ENCODE measurements at regions of chr18 and their contacts with region 1.

Region 1: DNA sequence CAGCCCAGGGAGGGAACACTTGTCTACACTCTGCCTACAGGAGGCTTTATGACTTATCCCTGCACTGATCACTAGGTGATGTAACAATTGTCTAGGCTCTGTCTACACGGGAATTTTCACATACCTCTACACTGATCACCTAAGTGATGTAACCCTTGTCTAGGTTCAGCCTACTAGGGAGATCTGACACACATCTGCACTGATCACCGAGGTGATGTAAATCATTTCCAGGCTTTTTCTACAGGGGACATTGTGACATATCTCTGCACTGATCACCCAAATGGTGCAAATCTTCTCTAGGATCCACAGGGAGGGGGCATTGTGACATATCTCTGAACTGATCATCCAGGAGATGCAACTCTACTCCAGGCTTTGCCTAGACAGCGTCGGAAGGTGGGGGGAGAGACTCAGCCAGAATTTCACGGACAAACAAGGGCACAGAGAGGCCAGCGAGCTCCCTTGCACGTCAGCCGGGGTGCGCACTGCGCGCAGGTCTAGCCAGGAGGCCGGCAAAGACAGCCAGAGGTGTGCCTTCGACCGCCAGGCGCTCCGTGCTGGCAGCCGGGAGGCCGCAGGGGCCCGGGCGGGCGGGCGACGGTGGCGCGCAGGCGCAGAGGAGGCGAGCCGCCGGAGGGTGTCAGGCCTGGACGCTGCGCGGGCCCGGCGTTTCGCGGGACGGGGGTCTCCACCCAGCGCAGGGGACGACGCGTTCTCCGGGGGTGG is 46.9 kb upstream of the USP14 start:
- DNase-seq: peak; percentile 60 to 88 (median 69)
- ATAC-seq: peak; percentile 60
- H3K4me3 ChIP-seq: peak overlapping the region in 1 of 2 experiments; percentile 19
- H3K4me3 Mint-ChIP-seq: peak overlapping the region; percentile 86
- H3K27ac ChIP-seq: peak overlapping the region in 1 of 2 experiments; percentile 44
- H3K27ac Mint-ChIP-seq: peak overlapping the region; percentile 94
- H3K4me1 ChIP-seq: peaks cover 6% of the 10 kb centered on the region
- H3K4me1 Mint-ChIP-seq: peaks cover 8% of the 10 kb centered on the region
- H3K27me3 ChIP-seq: no peaks in the 10 kb centered on the region
- H3K27me3 Mint-ChIP-seq: no peaks in the 10 kb centered on the region
- CTCF ChIP-seq: no peak

Region 2: DNA sequence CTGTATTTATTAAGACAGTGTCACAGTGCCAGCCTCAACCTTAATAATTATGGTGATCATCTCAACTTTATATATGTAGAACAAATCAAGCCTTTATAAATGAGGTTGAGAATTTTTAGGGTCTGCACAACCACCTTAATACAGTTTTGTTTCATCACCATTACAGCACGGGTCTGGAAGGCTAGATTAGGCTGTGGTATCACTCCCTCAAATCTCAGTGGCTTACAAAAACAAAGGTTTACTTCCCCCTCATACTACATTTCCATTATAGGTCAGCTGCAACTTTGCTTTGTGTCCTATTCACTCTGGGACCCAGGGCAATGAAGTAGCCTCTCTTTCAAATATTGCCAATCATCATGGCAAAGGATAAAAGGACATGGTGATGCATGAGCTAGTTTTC is 23.6 kb after region 1 on chr18:
- CTCF ChIA-PET with region 1: no interaction called
- POLR2A ChIA-PET with region 1: no interaction called
- intact Hi-C with region 1: no loop called
- DNase-seq: no peak
- ATAC-seq: no peak
- H3K4me3 ChIP-seq: no peak overlapping the region
- H3K4me3 Mint-ChIP-seq: no peak overlapping the region
- H3K27ac ChIP-seq: no peak overlapping the region
- H3K27ac Mint-ChIP-seq: no peak overlapping the region
- H3K4me1 ChIP-seq: no peaks in the 10 kb centered on the region
- H3K4me1 Mint-ChIP-seq: peaks cover 4% of the 10 kb centered on the region
- H3K27me3 ChIP-seq: no peaks in the 10 kb centered on the region
- H3K27me3 Mint-ChIP-seq: no peaks in the 10 kb centered on the region
- CTCF ChIP-seq: no peak

Region 3: DNA sequence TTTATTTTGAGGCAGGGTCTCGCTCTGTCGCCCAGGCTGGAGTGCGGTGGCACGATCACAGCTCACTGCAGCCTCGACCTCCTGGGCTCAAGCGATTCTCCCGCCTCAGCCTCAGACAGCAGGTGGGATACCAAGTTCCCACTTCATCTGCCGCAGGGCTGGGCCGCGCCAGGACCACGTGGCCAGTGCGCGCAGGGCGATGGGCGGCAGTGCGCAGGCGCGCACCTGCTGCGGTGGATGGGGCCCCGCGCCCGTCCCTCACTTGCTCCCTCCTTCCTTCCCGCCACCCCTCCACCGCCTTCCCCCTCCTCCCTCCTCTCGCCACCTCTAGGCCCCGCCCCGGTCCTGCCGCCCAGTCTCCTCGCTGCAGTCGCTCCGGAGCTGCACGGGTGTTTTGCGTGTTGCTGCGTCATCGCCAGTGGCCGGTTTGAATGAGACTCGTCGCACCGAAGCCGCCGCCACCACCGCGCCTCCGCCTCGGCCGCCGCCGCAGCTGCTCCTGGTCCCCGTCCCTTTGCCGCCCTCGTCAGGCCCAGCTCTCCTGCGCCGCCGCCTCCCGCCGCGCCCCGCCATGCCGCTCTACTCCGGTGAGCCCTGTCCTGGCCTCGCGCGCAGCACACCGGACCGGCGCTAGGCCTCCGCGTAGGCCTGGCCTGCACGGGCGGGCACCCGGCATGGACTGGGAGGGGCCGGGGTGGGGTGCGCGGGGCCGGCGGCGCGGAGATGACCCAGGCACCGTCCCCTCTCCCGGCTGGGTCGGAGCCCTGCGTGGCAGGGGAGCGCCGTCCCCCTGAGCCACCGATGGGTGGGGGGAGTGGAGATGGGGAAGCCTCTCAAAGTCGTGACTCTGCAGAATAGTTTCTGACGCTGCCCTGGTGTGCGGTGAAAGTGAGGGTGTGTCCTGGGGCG is 46.9 kb after region 1 on chr18 and contains the start of gene USP14:
- CTCF ChIA-PET with region 1: no interaction called
- POLR2A ChIA-PET with region 1: no interaction called
- intact Hi-C with region 1: loop called (anchors 1 kb)
- DNase-seq: peak; percentile 93 to 99 (median 97)
- ATAC-seq: peak; percentile 92
- H3K4me3 ChIP-seq: peak within 1 kb of the TSS; percentile 64 to 81
- H3K4me3 Mint-ChIP-seq: peak within 1 kb of the TSS; percentile 88
- H3K27ac ChIP-seq: peak within 1 kb of the TSS; percentile 59 to 83
- H3K27ac Mint-ChIP-seq: peak within 1 kb of the TSS; percentile 95
- H3K4me1 ChIP-seq: peaks cover 22% of the 10 kb centered on the region
- H3K4me1 Mint-ChIP-seq: peaks cover 35% of the 10 kb centered on the region
- H3K27me3 ChIP-seq: no peaks in the 10 kb centered on the region
- H3K27me3 Mint-ChIP-seq: no peaks in the 10 kb centered on the region
- CTCF ChIP-seq: no peak
- total RNA-seq, gene USP14: 61.3 to 64.1 TPM

Region 4: GRCh38 chr18:228586-228985 is 117.1 kb after region 1 on chr18:
- CTCF ChIA-PET with region 1: no interaction called
- POLR2A ChIA-PET with region 1: no interaction called
- intact Hi-C with region 1: no loop called
- DNase-seq: no peak
- ATAC-seq: no peak
- H3K4me3 ChIP-seq: no peak overlapping the region
- H3K4me3 Mint-ChIP-seq: no peak overlapping the region
- H3K27ac ChIP-seq: no peak overlapping the region
- H3K27ac Mint-ChIP-seq: no peak overlapping the region
- H3K4me1 ChIP-seq: no peaks in the 10 kb centered on the region
- H3K4me1 Mint-ChIP-seq: no peaks in the 10 kb centered on the region
- H3K27me3 ChIP-seq: no peaks in the 10 kb centered on the region
- H3K27me3 Mint-ChIP-seq: no peaks in the 10 kb centered on the region
- CTCF ChIP-seq: no peak

Region 5: GRCh38 chr18:267688-268552 is 156.5 kb after region 1 on chr18 and contains the start of gene THOC1:
- CTCF ChIA-PET with region 1: no interaction called
- POLR2A ChIA-PET with region 1: no interaction called
- intact Hi-C with region 1: loop called (anchors 2 to 5 kb)
- DNase-seq: peak; percentile 87 to 96 (median 95)
- ATAC-seq: peak; percentile 90
- H3K4me3 ChIP-seq: peak within 1 kb of the TSS; percentile 90 to 98
- H3K4me3 Mint-ChIP-seq: peak within 1 kb of the TSS; percentile 99
- H3K27ac ChIP-seq: peak within 1 kb of the TSS; percentile 93 to 99
- H3K27ac Mint-ChIP-seq: peak within 1 kb of the TSS; percentile 100
- H3K4me1 ChIP-seq: peaks cover 12% of the 10 kb centered on the region
- H3K4me1 Mint-ChIP-seq: peaks cover 44% of the 10 kb centered on the region
- H3K27me3 ChIP-seq: no peaks in the 10 kb centered on the region
- H3K27me3 Mint-ChIP-seq: no peaks in the 10 kb centered on the region
- CTCF ChIP-seq: no peak
- total RNA-seq, gene THOC1: 114 to 128 TPM

Region 6: DNA sequence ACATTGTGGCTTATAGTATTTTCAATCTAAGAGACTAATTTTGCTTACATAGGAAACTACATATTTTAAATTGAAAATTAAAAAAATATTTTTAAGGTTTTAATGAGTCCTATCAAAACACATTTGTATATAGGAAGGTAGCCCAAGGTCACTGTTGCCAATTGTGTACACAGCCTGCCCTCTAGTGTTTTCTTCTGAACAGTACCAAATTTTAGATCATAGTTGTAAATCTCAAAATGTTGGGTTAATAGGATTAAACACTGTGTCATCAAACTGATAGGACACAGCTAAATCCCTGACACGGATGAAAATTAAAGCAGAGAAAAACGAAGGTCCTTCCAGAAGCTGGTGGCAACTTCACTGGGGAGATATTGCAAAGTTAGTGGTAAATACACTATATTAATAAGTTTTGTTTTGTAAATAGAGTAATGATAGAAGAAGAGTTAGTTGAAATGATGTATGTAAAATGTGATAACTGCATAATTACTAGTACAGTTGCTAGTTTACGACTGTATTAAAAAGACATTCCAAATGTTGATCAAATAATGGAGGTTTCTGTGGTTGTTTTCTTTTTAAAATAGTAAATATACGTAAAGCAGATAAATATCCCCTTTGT is 505.0 kb after region 1 on chr18:
- CTCF ChIA-PET with region 1: no interaction called
- POLR2A ChIA-PET with region 1: no interaction called
- intact Hi-C with region 1: loop called in 1 of 2 experiments (anchors 5 kb)
- DNase-seq: peak in 2 of 9 experiments; percentile 36 to 52
- ATAC-seq: peak; percentile 58
- H3K4me3 ChIP-seq: no peak overlapping the region
- H3K4me3 Mint-ChIP-seq: no peak overlapping the region
- H3K27ac ChIP-seq: no peak overlapping the region
- H3K27ac Mint-ChIP-seq: no peak overlapping the region
- H3K4me1 ChIP-seq: no peaks in the 10 kb centered on the region
- H3K4me1 Mint-ChIP-seq: no peaks in the 10 kb centered on the region
- H3K27me3 ChIP-seq: no peaks in the 10 kb centered on the region
- H3K27me3 Mint-ChIP-seq: peaks cover 2% of the 10 kb centered on the region
- CTCF ChIP-seq: peak; percentile 47